Activated CD4-positive, alpha-beta memory T cell treated with anti-CD3 and anti-CD28 coated beads for 36 hours (primary cell): ENCODE measurements at regions of chr10 and their contacts with region 1.

Region 1: GRCh38 chr10:94320285-94320914 is 42.3 kb downstream of the NOC3L start:
- DNase-seq: peak; percentile 69
- H3K4me3 Mint-ChIP-seq: no peak overlapping the region
- H3K27ac Mint-ChIP-seq: no peak overlapping the region
- H3K4me1 Mint-ChIP-seq: peaks cover 3% of the 10 kb centered on the region
- H3K27me3 Mint-ChIP-seq: no peaks in the 10 kb centered on the region

Region 2: GRCh38 chr10:93916257-93917063 is 403.9 kb before region 1 on chr10:
- CTCF ChIA-PET with region 1: interaction called, 12 read pairs
- POLR2A ChIA-PET with region 1: no interaction called
- intact Hi-C with region 1: loop called (anchors 1 kb)
- DNase-seq: no peak
- H3K4me3 Mint-ChIP-seq: no peak overlapping the region
- H3K27ac Mint-ChIP-seq: no peak overlapping the region
- H3K4me1 Mint-ChIP-seq: no peaks in the 10 kb centered on the region
- H3K27me3 Mint-ChIP-seq: no peaks in the 10 kb centered on the region

Region 3: GRCh38 chr10:94308866-94309265 is 11.5 kb before region 1 on chr10:
- CTCF ChIA-PET with region 1: interaction called, 37 read pairs
- POLR2A ChIA-PET with region 1: no interaction called
- intact Hi-C with region 1: no loop called
- DNase-seq: no peak
- H3K4me3 Mint-ChIP-seq: no peak overlapping the region
- H3K27ac Mint-ChIP-seq: no peak overlapping the region
- H3K4me1 Mint-ChIP-seq: no peaks in the 10 kb centered on the region
- H3K27me3 Mint-ChIP-seq: peaks cover 24% of the 10 kb centered on the region

Region 4: DNA sequence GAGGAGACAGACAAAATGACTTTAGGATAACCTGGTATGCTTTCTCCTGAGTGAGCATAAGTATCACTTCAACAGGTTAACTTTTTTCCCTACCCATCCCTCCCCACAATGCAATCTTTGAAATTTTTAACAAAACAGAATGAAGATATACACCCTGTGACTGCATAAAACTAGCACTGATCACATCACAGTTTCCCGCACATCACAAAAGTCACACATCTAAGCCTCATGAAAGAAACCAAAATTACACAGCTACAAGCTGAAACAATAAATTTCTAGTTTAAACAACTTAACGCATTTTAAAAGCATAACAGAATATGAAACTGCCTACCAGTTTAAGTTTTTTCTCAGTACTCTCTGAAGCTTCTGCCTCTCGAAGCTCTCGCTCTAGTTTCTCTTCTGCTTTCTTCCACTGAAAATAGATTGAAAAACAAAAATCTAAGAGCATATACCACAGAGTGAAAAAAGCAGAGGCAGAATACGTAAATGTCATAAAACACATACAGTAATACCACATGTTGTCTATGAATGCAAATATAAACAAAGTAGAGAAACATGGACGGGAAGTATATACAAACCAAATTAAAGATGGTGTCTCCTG is 24.2 kb after region 1 on chr10:
- CTCF ChIA-PET with region 1: interaction called, 11 read pairs
- POLR2A ChIA-PET with region 1: no interaction called
- intact Hi-C with region 1: no loop called
- DNase-seq: no peak
- H3K4me3 Mint-ChIP-seq: no peak overlapping the region
- H3K27ac Mint-ChIP-seq: no peak overlapping the region
- H3K4me1 Mint-ChIP-seq: no peaks in the 10 kb centered on the region
- H3K27me3 Mint-ChIP-seq: no peaks in the 10 kb centered on the region

Region 5: GRCh38 chr10:94362360-94363250 is 42.2 kb after region 1 on chr10 and contains the start of gene NOC3L:
- CTCF ChIA-PET with region 1: interaction called, 14 read pairs
- POLR2A ChIA-PET with region 1: no interaction called
- intact Hi-C with region 1: no loop called
- DNase-seq: peak; percentile 96
- H3K4me3 Mint-ChIP-seq: peak within 1 kb of the TSS; percentile 88
- H3K27ac Mint-ChIP-seq: peak within 1 kb of the TSS; percentile 89
- H3K4me1 Mint-ChIP-seq: peaks cover 33% of the 10 kb centered on the region
- H3K27me3 Mint-ChIP-seq: peaks cover 6% of the 10 kb centered on the region
- total RNA-seq, gene NOC3L: 37.6 to 39.2 TPM